Heart right ventricle (tissue), 16 donors: ENCODE measurements at regions of chr1 and their contacts with region 1.

Region 1: DNA sequence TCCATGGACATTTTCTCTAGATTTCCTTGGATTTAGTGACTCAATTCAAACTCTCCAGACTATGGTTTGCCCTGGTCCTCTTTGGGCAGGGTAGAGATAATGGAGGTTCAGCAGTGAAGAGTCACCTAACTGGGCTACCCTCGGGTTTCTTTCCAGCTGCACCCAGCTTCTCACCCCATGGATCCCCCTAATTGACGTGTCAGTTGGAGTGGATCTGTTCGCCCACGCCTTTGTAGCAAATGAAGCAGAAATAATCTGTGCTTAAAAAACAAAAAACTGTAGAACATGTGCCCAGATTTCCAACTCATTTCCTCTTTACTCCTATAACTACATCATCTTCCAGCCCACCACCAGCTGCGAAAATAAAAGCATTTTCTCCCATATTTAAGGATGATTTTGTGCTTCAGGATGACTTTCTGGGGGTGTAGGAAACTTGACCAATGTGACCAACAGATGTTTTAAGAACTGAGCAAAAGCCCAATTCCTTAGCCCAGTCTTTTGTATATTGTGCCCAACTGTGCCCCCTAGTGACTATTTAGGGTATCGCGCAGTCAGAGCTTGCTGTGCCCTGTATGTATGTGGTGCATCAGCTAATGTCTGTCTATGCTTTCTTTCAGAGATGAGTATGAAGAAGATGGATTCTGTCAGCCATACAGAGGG is 66.5 kb upstream of the UBE2U start:
- DNase-seq: peak; percentile 43 to 81
- ATAC-seq: peak; percentile 76 to 91 (median 88)
- H3K4me3 ChIP-seq: no peak overlapping the region
- H3K27ac ChIP-seq: peak overlapping the region in 4 of 10 donors; percentile 23 to 59 (median 32)
- H3K4me1 ChIP-seq: peaks cover 0 to 14% (median 3%) of the 10 kb centered on the region in 9 donors
- H3K27me3 ChIP-seq: no peaks in the 10 kb centered on the region
- CTCF ChIP-seq: peak; percentile 68 to 89 (median 84)

Region 2: DNA sequence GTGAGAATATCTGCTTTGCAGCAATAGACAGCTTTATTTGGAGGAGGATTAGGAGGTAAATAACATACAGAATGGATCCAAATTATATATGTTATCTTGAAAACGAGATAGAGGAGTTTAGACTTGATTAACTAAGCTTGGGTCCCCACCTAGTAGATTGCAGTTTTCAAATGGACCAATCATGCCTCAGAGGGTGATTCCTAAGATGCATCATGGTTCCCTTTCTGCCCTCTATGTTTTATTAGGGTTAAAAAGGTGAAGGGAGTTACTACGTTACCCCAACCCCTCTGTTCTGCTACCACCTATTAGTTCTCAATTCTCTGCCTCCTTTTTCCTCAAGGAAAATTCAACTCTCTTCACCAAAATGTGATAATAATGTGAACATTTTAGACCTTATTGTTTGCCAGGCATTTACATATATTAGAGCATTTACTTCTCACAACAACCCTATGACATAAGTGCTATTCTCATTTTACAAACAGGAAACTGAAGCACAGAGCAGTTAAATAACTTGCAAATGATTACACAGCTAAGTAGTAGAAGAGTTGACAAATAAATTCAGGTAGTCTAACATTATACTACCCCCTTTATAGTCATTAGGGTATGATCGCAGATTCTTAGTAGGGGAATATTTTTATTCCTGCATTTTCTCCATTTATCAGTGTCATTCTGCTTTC is 567.1 kb before region 1 on chr1:
- intact Hi-C with region 1: loop called in 1 of 10 experiments (anchors 5 kb)
- DNase-seq: no peak
- ATAC-seq: no peak
- H3K4me3 ChIP-seq: no peak overlapping the region
- H3K27ac ChIP-seq: no peak overlapping the region
- H3K4me1 ChIP-seq: peaks cover 0 to 4% (median 0%) of the 10 kb centered on the region in 9 donors
- H3K27me3 ChIP-seq: no peaks in the 10 kb centered on the region
- CTCF ChIP-seq: no peak

Region 3: GRCh38 chr1:63691701-63692425 is 445.0 kb before region 1 on chr1:
- intact Hi-C with region 1: loop called in 9 of 10 experiments (anchors 1 to 10 kb)
- DNase-seq: peak in 1 of 2 donors; percentile 65
- ATAC-seq: peak; percentile 69 to 93 (median 87)
- H3K4me3 ChIP-seq: no peak overlapping the region
- H3K27ac ChIP-seq: peak overlapping the region in 6 of 10 donors; percentile 2 to 67 (median 28)
- H3K4me1 ChIP-seq: peaks cover 3 to 18% (median 9%) of the 10 kb centered on the region in 9 donors
- H3K27me3 ChIP-seq: no peaks in the 10 kb centered on the region
- CTCF ChIP-seq: peak; percentile 40 to 80 (median 75)

Region 4: GRCh38 chr1:63773815-63774616 is 362.9 kb before region 1 on chr1 and contains the start of gene ROR1:
- intact Hi-C with region 1: loop called (anchors 2 to 10 kb)
- DNase-seq: peak; percentile 86 to 88
- ATAC-seq: peak; percentile 95 to 98 (median 97)
- H3K4me3 ChIP-seq: peak within 1 kb of the TSS; percentile 55 to 90 (median 73)
- H3K27ac ChIP-seq: peak within 1 kb of the TSS; percentile 69 to 96 (median 91)
- H3K4me1 ChIP-seq: peaks cover under 1 to 48% (median 16%) of the 10 kb centered on the region in 9 donors
- H3K27me3 ChIP-seq: peaks cover 0 to 46% (median 0%) of the 10 kb centered on the region in 7 donors
- CTCF ChIP-seq: peak; percentile 42 to 83 (median 63)
- total RNA-seq, gene ROR1: 12.0 to 36.2 (median 19.0) TPM

Region 5: GRCh38 chr1:63935143-63935542 is 201.7 kb before region 1 on chr1:
- intact Hi-C with region 1: loop called in 7 of 10 experiments (anchors 5 to 10 kb)
- DNase-seq: no peak
- ATAC-seq: peak in 7 of 8 donors; percentile 54 to 86 (median 74)
- H3K4me3 ChIP-seq: no peak overlapping the region
- H3K27ac ChIP-seq: peak overlapping the region in 5 of 10 donors; percentile 10 to 75 (median 41)
- H3K4me1 ChIP-seq: peaks cover 0 to 44% (median 15%) of the 10 kb centered on the region in 9 donors
- H3K27me3 ChIP-seq: no peaks in the 10 kb centered on the region
- CTCF ChIP-seq: peak in 7 of 9 donors; percentile 8 to 53 (median 41)

Region 6: GRCh38 chr1:64051796-64052195 is 85.1 kb before region 1 on chr1:
- intact Hi-C with region 1: loop called in 1 of 10 experiments (anchors 5 kb)
- DNase-seq: peak in 1 of 2 donors; percentile 34
- ATAC-seq: peak in 7 of 8 donors; percentile 38 to 75 (median 69)
- H3K4me3 ChIP-seq: no peak overlapping the region
- H3K27ac ChIP-seq: peak overlapping the region in 5 of 10 donors; percentile 17 to 47 (median 40)
- H3K4me1 ChIP-seq: peaks cover 0 to 72% (median 9%) of the 10 kb centered on the region in 9 donors
- H3K27me3 ChIP-seq: no peaks in the 10 kb centered on the region
- CTCF ChIP-seq: no peak

Region 7: GRCh38 chr1:64100791-64101190 is 36.1 kb before region 1 on chr1:
- intact Hi-C with region 1: no loop called
- DNase-seq: no peak
- ATAC-seq: no peak
- H3K4me3 ChIP-seq: no peak overlapping the region
- H3K27ac ChIP-seq: no peak overlapping the region
- H3K4me1 ChIP-seq: peaks cover 0 to 29% (median 12%) of the 10 kb centered on the region in 9 donors
- H3K27me3 ChIP-seq: no peaks in the 10 kb centered on the region
- CTCF ChIP-seq: no peak